PC-3 (cell line): ENCODE measurements at regions of chr3 and their contacts with region 1.

Region 1: DNA sequence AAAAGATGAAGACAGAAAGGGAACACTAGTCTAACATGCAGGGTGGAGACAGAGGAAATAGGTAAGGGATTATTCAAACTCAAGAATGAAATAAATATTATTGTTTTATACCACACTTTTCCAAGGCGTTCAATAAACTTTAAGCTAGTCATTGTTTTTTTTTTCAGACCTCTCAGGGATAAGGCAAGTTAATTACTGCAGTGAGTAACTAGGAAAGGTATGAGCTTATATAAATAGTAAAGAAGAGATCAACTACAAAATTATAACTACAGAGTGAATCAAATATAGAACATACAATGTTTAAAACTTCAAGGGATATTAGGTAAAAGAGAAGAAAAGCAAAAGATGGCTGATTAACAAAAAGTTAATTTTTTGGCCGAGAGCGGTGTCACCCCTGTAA is 31.5 kb upstream of the XXYLT1 start:
- DNase-seq: no peak
- ATAC-seq: no peak
- H3K4me3 ChIP-seq: no peak overlapping the region
- H3K27ac ChIP-seq: no peak overlapping the region
- H3K4me1 ChIP-seq: no peaks in the 10 kb centered on the region
- H3K27me3 ChIP-seq: no peaks in the 10 kb centered on the region
- CTCF ChIP-seq: no peak

Region 2: GRCh38 chr3:195226900-195227447 is 75.5 kb before region 1 on chr3:
- CTCF ChIA-PET with region 1: no interaction called
- POLR2A ChIA-PET with region 1: no interaction called
- intact Hi-C with region 1: no loop called
- DNase-seq: peak; percentile 15
- ATAC-seq: peak; percentile 20; the same call in 1 of the 2 replicates
- H3K4me3 ChIP-seq: no peak overlapping the region
- H3K27ac ChIP-seq: no peak overlapping the region
- H3K4me1 ChIP-seq: peaks cover 13% of the 10 kb centered on the region
- H3K27me3 ChIP-seq: no peaks in the 10 kb centered on the region
- CTCF ChIP-seq: peak; percentile 48

Region 3: DNA sequence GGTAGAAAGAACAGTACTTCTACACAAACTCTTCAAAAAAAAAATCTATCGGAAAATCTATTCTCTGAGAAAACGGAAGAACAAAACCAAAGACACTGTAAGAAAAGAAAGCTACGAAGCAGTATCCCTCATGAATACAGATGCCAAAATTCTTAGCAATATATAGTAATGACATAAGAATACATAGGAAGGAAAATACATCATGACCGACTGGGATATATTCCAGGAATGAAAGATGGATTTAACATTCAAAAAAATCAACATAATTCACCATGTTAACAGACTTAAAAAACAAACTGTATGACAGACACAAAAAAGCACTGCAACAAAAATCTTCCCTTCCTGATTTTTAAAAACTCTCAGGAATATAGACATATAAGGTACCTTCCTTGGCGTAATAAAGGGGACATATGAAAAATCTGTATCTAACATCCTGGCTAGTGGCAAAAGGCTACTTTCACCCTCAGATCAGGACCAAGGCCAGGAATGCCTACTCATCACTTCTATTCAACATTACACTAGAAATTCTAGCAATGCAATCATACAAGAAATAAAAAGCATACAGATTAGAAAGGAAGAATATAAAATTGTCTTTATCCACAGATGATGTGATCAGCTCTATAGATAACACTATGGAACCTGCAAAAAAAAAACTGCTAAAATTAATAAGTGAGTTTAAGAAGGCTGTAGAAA is 46.1 kb after region 1 on chr3:
- CTCF ChIA-PET with region 1: no interaction called
- POLR2A ChIA-PET with region 1: no interaction called
- intact Hi-C with region 1: no loop called
- DNase-seq: no peak
- ATAC-seq: no peak
- H3K4me3 ChIP-seq: no peak overlapping the region
- H3K27ac ChIP-seq: no peak overlapping the region
- H3K4me1 ChIP-seq: 0 out of 2 replicates have a peak, but pooled peaks cover 7% of the 10 kb centered on the region
- H3K27me3 ChIP-seq: no peaks in the 10 kb centered on the region
- CTCF ChIP-seq: no peak

Region 4: DNA sequence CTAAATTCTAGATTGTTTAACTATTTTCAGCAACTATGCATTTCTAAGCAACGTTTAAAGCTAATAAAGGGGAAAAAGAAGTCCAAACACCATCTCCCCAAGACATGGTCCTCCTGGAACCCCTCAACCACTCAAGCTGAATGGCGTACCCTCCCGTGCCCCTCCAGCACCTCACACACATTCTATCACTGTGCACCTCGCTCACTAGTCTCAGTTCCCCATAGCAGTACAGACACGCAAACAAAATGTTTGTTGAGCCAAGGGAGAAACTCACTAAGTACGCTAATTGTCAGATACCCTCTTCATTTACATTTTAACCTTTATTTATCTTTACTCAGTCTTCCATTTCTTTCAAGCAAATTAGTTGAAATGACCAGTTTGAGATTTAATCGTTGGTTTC is 91.6 kb after region 1 on chr3:
- CTCF ChIA-PET with region 1: interaction called, 10 read pairs
- POLR2A ChIA-PET with region 1: no interaction called
- intact Hi-C with region 1: no loop called
- DNase-seq: no peak
- ATAC-seq: no peak
- H3K4me3 ChIP-seq: no peak overlapping the region
- H3K27ac ChIP-seq: no peak overlapping the region
- H3K4me1 ChIP-seq: no peaks in the 10 kb centered on the region
- H3K27me3 ChIP-seq: no peaks in the 10 kb centered on the region
- CTCF ChIP-seq: no peak